ENCODE measurements at regions of chr3 and their contacts with region 1.

Region 1: GRCh38 chr3:72821161-72821781 is 27.0 kb downstream of the SHQ1 start:
- DNase-seq: no peak

Region 2: GRCh38 chr3:71873093-71873611 is 948.1 kb before region 1 on chr3:
- intact Hi-C with region 1: loop called in 1 of 2 experiments (anchors 5 kb)
- DNase-seq: no peak

Region 3: DNA sequence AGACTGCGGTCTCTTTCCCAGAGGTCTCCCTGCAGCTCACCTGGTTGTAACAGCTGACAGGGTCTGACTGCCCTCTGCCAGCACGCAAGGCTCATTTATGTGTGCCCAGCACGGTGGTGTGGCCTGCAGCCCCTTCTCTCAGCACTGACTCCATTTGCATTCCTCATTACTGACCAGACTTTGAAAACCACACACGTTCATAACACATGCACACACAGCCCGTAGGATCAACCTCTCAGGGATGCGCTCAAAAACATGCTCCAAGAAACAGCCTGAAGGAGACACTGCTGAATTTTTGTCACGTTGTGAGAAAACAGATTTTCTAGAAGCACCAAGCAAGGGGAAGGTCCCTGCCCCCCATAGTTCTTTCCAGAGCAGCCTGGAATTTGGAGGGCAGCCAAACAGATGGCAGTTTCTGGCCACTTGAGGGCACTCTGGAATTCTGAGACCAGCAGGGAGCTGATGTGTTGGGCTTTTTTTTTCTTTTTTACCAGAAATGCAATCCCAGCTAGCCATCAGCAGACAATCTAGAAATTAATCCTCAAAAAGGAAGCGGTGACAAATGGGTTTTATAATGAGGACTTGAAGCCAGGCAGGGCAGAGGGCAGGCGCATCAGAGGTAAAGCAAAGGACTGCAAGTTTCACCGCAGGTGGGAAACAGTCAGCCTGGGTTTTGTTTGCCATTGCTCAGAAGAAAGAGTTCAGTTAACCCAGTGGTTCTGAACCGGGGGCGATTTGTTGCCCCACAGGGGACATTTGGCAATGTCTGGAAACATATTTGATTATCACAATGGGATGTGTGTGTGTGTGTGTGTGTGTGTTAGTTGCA is 865.8 kb before region 1 on chr3:
- intact Hi-C with region 1: loop called in 1 of 2 experiments (anchors 10 kb)
- DNase-seq: peak; percentile 83

Region 4: DNA sequence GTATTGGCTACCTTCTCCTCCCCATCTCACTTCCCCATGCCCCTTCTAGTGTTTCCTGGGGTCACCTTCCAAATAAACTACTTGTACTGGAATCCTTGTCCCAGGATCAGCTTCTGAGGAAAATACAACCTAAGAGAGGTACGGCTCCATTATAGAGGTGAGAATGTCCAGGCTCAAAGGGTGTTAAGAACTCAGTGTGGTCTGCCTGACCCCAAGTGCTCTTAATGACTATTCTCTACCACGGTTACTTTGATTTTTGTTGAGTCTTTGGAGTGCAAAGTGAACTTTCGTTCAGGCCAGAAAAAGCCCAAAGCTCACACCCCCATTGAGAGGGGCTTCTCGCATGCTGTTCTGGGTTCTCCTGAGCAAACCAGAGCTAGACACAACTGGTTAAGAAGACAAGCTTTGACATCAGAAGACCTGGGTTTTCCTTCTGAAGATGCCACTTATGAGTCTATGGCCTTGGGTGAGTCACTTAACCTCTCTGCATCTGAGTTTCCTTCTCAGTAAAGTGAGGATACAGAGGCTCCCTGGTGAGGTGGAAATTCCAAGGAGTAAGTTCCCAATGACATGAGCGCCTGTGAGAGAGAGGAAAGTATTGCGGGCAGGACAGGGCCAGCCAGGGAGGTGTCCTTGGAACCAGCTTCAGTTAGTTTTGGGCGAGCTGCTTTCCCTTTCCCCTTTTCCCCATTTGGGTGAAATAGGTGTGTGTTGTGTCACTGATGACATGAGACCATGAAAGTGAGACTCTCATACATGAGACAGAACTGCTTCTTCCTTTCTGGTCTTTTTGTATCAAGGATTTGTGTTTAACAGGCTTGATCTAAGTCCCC is 561.3 kb before region 1 on chr3:
- intact Hi-C with region 1: loop called in 1 of 2 experiments (anchors 5 kb)
- DNase-seq: no peak

Measured in posterior vena cava (tissue), 2 donors.